ENCODE measurements at regions of chr14 and their contacts with region 1.

Region 1: GRCh38 chr14:106831322-106831720 is 1304.9 kb downstream of the TMEM121 start:
- DNase-seq: peak; percentile 78
- ATAC-seq: peak; percentile 54
- H3K4me3 ChIP-seq: no peak overlapping the region
- H3K4me3 Mint-ChIP-seq: no peak overlapping the region
- H3K27ac ChIP-seq: no peak overlapping the region
- H3K27ac Mint-ChIP-seq: no peak overlapping the region
- H3K4me1 ChIP-seq: no peaks in the 10 kb centered on the region
- H3K4me1 Mint-ChIP-seq: peaks cover 12% of the 10 kb centered on the region
- H3K27me3 ChIP-seq: no peaks in the 10 kb centered on the region
- H3K27me3 Mint-ChIP-seq: no peaks in the 10 kb centered on the region
- CTCF ChIP-seq: peak; percentile 58

Region 2: GRCh38 chr14:106390401-106390800 is 440.9 kb before region 1 on chr14:
- CTCF ChIA-PET with region 1: no interaction called
- POLR2A ChIA-PET with region 1: no interaction called
- intact Hi-C with region 1: no loop called
- DNase-seq: no peak
- ATAC-seq: no peak
- H3K4me3 ChIP-seq: no peak overlapping the region
- H3K4me3 Mint-ChIP-seq: no peak overlapping the region
- H3K27ac ChIP-seq: no peak overlapping the region
- H3K27ac Mint-ChIP-seq: peak overlapping the region; percentile 21
- H3K4me1 ChIP-seq: no peaks in the 10 kb centered on the region
- H3K4me1 Mint-ChIP-seq: no peaks in the 10 kb centered on the region
- H3K27me3 ChIP-seq: peaks cover 0 to 13% (median 0%) of the 10 kb centered on the region in 4 experiments
- H3K27me3 Mint-ChIP-seq: peaks cover 32% of the 10 kb centered on the region
- CTCF ChIP-seq: no peak

Region 3: GRCh38 chr14:106844608-106845285 is 13.4 kb after region 1 on chr14:
- CTCF ChIA-PET with region 1: interaction called, 57 read pairs
- POLR2A ChIA-PET with region 1: interaction called, 3 read pairs
- intact Hi-C with region 1: loop called (anchors 2 kb)
- DNase-seq: peak; percentile 86
- ATAC-seq: peak; percentile 73
- H3K4me3 ChIP-seq: peak overlapping the region; percentile 65 to 99 (median 97)
- H3K4me3 Mint-ChIP-seq: peak overlapping the region; percentile 97
- H3K27ac ChIP-seq: peak overlapping the region; percentile 63 to 95
- H3K27ac Mint-ChIP-seq: peak overlapping the region; percentile 83
- H3K4me1 ChIP-seq: peaks cover 49 to 54% of the 10 kb centered on the region in 2 donors
- H3K4me1 Mint-ChIP-seq: peaks cover 66% of the 10 kb centered on the region
- H3K27me3 ChIP-seq: no peaks in the 10 kb centered on the region
- H3K27me3 Mint-ChIP-seq: no peaks in the 10 kb centered on the region
- CTCF ChIP-seq: no peak

Region 4: GRCh38 chr14:106850913-106851825 is 19.8 kb after region 1 on chr14:
- CTCF ChIA-PET with region 1: interaction called, 57 read pairs
- POLR2A ChIA-PET with region 1: no interaction called
- intact Hi-C with region 1: no loop called
- DNase-seq: peak; percentile 81
- ATAC-seq: peak; percentile 74
- H3K4me3 ChIP-seq: peak overlapping the region; percentile 67 to 96 (median 89)
- H3K4me3 Mint-ChIP-seq: peak overlapping the region; percentile 90
- H3K27ac ChIP-seq: peak overlapping the region; percentile 77 to 95
- H3K27ac Mint-ChIP-seq: peak overlapping the region; percentile 97
- H3K4me1 ChIP-seq: peaks cover 58 to 62% of the 10 kb centered on the region in 2 donors
- H3K4me1 Mint-ChIP-seq: peaks cover 75% of the 10 kb centered on the region
- H3K27me3 ChIP-seq: no peaks in the 10 kb centered on the region
- H3K27me3 Mint-ChIP-seq: no peaks in the 10 kb centered on the region
- CTCF ChIP-seq: no peak